ENCODE measurements at regions of chr6 and their contacts with region 1.

Region 1: GRCh38 chr6:117602151-117602898 is at the start of gene GOPC:
- DNase-seq: peak; percentile 88
- H3K4me3 ChIP-seq: peak within 1 kb of the TSS; percentile 91
- CTCF ChIP-seq: peak; percentile 42

Region 2: DNA sequence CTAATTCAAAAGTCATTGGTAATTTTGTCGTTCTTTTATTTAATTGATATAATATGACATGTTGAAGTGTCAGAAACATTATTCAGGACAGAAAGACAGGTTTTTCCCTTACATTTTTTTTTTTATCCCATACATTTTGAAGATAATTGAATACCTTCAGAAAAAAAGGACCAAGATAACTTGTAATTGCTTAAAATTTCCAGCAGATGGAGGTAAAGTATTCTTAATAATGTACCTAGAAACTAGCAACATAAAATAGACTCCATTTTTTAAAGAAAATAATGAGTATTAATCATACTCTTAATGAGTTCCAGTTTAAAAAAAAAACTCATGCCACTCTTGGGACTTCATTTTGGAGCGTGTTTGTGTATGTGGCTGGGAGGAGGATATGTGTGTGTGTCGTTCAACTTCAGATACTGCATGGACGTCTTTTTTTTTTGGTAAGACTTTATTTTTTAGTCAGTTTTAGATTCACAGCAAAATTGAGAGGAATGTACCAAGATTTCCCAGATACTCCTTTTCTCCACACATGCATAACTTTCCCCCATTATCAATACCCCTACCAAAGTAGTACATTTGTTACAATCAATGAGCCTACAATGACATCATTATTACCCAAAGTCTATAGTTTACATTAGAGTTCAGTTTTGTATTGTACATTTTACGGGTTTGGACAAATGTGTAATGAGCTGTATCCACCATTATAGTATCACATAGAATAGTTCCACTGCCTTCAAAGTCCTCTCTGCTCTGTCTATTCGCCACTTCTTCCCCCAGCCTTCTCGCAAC is 256.0 kb before region 1 on chr6:
- CTCF ChIA-PET with region 1: interaction called, 75 read pairs
- POLR2A ChIA-PET with region 1: interaction called, 4 read pairs
- DNase-seq: no peak
- H3K4me3 ChIP-seq: no peak overlapping the region; the same call in 1 of the 2 replicates
- CTCF ChIP-seq: no peak

Region 3: DNA sequence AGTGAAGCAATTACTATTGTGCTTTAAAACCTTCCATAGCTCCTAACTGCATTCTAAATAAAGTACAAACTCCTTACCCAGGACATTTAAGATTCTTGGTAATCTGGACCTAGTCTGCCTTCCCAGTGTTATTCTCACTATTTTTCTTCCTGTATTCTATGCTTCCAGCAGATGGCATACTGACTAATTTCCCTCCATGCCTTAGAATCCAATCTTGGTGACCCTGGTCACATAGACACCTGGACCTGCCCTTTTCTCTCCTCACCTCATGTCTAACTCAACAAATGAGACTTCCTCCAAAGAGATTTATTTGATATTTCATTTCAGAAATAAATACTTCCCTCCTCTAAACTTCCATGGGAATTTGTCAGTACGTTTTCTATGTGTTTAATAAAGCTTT is 202.4 kb before region 1 on chr6:
- CTCF ChIA-PET with region 1: interaction called, 162 read pairs
- POLR2A ChIA-PET with region 1: no interaction called
- DNase-seq: no peak
- H3K4me3 ChIP-seq: no peak overlapping the region
- CTCF ChIP-seq: peak; percentile 10

Region 4: DNA sequence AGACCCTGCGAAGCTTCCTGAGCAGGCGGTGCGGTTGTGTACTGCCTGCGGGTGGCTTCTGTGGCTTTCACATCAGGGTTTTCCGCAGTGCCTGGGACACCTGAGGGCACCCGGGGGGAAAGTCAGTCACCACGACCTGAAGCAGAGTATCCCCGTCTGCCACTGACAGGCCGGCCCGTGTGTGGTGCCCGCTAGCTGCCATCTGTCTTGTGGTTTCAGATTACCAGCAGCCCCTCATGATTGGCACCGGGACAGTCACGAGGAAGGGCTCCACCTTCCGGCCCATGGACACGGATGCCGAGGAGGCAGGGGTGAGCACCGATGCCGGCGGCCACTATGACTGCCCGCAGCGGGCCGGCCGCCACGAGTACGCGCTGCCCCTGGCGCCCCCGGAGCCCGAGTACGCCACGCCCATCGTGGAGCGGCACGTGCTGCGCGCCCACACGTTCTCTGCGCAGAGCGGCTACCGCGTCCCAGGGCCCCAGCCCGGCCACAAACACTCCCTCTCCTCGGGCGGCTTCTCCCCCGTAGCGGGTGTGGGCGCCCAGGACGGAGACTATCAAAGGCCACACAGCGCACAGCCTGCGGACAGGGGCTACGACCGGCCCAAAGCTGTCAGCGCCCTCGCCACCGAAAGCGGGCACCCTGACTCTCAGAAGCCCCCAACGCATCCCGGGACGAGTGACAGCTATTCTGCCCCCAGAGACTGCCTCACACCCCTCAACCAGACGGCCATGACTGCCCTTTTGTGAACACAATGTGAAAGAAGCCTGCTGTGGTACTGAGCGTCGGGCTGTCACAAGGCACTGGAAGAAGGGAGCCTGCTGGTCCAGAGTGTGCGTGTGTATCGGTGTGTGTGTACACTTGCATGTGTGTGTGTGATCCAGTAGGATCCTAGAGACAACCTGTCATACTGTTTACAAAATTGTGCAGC is 54.4 kb before region 1 on chr6:
- CTCF ChIA-PET with region 1: interaction called, 13 read pairs
- POLR2A ChIA-PET with region 1: interaction called, 5 read pairs
- DNase-seq: no peak
- H3K4me3 ChIP-seq: peak overlapping the region; percentile 45
- CTCF ChIP-seq: peak; percentile 15

Region 5: DNA sequence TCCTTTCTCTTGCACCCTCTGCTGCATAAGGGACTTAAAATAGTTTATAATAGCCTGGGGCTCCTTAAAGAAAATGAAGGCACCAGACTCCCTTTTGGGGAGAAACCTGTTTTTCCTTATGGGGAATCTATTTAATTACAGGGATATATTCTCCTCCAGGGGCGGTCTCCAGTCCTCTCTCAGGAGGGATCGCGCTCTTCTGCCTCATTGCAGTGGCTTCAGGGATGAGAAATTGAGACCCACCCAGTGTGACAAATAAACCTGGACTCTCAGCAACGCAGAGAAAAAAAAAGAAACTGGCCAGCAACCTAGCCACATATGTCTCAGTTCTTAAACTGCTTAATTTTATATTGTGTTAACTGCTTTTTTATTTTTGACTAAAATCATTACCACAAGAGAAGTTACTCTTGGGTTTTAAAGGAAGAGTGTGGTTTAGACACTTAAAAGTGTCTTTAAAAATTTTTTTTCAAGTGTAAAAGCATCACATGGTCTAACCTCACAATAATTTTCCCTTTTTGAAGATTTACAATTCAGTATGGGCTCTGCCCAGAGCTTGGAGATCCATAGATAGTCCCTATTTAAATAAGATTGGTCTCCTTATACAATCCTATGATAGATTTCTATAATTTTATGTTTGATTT is 11.7 kb after region 1 on chr6:
- CTCF ChIA-PET with region 1: interaction called, 14 read pairs
- POLR2A ChIA-PET with region 1: no interaction called
- DNase-seq: no peak
- H3K4me3 ChIP-seq: no peak overlapping the region
- CTCF ChIP-seq: no peak

Measured in AG04449 (cell line).